ENCODE measurements at regions of chr14 and their contacts with region 1.

Region 1: DNA sequence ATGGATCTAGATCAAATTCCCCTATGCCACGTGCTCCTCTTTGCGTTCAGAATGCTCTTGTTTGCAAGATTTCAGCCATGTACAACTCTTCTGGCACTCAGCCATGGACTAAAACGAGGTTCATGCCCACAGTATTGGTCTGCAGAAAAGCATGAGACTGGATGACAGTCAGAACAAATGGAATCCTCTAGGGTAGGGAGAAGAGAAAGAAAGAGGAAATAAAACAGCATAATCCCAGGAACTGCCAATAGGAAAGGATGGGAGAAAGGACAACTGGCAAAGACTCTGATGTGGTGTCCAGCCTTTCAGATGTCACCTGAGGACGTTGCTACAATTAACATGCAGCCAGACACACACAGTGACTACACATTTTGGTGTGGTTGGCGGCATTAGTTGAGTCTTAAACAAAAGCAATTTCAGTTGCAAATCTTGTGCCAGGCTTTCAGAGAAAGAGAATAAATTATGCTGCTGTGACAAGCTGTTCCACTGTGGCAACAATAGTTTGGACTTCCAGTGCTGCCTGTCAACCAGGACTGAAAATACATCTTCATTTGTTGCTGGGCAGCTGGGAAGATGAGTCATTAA is 338.0 kb downstream of the RGS6 start:
- DNase-seq: no peak
- ATAC-seq: no peak
- H3K4me3 ChIP-seq: no peak overlapping the region
- H3K4me3 Mint-ChIP-seq: no peak overlapping the region
- H3K27ac ChIP-seq: no peak overlapping the region
- H3K27ac Mint-ChIP-seq: no peak overlapping the region
- H3K4me1 ChIP-seq: no peaks in the 10 kb centered on the region
- H3K4me1 Mint-ChIP-seq: no peaks in the 10 kb centered on the region
- H3K27me3 ChIP-seq: no peaks in the 10 kb centered on the region
- H3K27me3 Mint-ChIP-seq: peaks cover 19% of the 10 kb centered on the region
- CTCF ChIP-seq: no peak

Region 2: DNA sequence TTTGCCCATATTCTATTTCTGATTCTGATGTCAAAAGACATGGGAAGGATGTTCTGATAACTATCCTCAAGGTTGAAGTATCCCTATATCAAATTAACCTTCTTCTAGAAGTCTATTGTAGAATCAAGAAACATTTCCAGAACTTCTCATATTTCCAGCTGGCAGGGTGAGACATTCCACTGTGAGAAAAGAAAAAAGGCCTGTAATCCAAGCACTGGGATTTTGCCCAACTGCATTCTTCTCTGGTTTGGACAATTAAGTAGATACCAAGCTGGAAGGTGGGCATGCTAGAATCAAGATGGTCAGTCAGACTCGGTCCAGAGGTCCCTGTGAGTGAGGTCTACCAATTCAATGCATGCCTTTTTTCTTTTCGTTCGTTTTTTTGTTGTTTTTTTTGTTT is 1521.8 kb before region 1 on chr14:
- CTCF ChIA-PET with region 1: no interaction called
- POLR2A ChIA-PET with region 1: no interaction called
- intact Hi-C with region 1: loop called in 1 of 2 experiments (anchors 10 kb)
- DNase-seq: no peak
- ATAC-seq: no peak
- H3K4me3 ChIP-seq: no peak overlapping the region
- H3K4me3 Mint-ChIP-seq: no peak overlapping the region
- H3K27ac ChIP-seq: no peak overlapping the region
- H3K27ac Mint-ChIP-seq: no peak overlapping the region
- H3K4me1 ChIP-seq: no peaks in the 10 kb centered on the region
- H3K4me1 Mint-ChIP-seq: no peaks in the 10 kb centered on the region
- H3K27me3 ChIP-seq: no peaks in the 10 kb centered on the region
- H3K27me3 Mint-ChIP-seq: no peaks in the 10 kb centered on the region
- CTCF ChIP-seq: no peak